ENCODE measurements at regions of chr2 and their contacts with region 1.

Region 1: GRCh38 chr2:23926750-23927571 is at the start of gene ATAD2B:
- DNase-seq: peak; percentile 85
- ATAC-seq: peak; percentile 93
- H3K4me3 ChIP-seq: peak within 1 kb of the TSS; percentile 79 to 84
- H3K27ac ChIP-seq: peak within 1 kb of the TSS; percentile 86
- H3K4me1 ChIP-seq: peaks cover 5 to 7% of the 10 kb centered on the region in 2 experiments; a peak in 2 of 4 replicates
- H3K27me3 ChIP-seq: no peaks in the 10 kb centered on the region
- CTCF ChIP-seq: peak; percentile 61 to 77 (median 71)
- POLR2A ChIP-seq: peak; percentile 76
- RAD21 ChIP-seq: peak; percentile 77
- total RNA-seq, gene ATAD2B: 9.6 TPM

Region 2: GRCh38 chr2:23916727-23917405 is 10.1 kb before region 1 on chr2:
- CTCF ChIA-PET with region 1: interaction called, 11 read pairs
- POLR2A ChIA-PET with region 1: interaction called, 5 read pairs
- RAD21 ChIA-PET with region 1: no interaction called
- intact Hi-C with region 1: no loop called
- DNase-seq: no peak
- ATAC-seq: no peak
- H3K4me3 ChIP-seq: no peak overlapping the region
- H3K27ac ChIP-seq: no peak overlapping the region
- H3K4me1 ChIP-seq: peaks cover 11 to 23% of the 10 kb centered on the region in 2 experiments
- H3K27me3 ChIP-seq: no peaks in the 10 kb centered on the region
- CTCF ChIP-seq: no peak
- POLR2A ChIP-seq: no peak
- RAD21 ChIP-seq: no peak

Region 3: DNA sequence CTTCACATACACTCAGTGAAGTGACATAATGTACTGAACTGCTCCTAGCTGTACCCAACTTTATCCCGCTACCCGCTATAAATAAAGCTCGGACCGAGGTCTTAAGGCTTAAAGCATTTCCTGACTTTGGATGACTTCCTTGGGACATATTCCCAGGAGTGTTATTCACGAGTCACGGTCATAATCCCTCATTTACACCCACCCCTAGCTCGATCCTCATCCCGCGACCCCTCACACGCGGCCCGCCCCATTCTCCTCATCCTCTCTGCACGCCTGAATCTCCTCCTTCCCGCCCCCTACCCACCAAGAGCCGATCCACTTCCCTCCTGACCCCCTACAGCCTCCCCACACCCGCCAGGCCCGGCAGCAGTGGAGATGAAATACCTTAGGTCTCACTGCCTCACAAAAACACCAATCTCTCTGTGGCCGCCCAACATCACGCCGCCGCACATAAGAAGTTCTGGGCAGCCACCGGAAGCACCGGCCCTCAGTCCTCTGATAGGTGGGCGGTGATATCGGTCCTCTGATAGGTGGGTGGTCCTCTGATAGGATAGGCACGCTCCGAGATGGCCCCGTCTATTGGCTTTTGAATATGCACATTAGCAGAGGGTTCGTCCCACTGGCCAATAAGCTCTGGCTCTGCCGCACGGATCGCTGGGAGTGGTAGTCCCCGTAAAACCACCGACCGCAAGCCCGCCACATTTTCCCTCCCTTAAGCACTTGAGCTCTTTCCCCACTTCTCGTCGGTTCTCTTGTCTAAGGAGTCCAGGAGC is 120.2 kb after region 1 on chr2 and contains the start of gene WDCP:
- CTCF ChIA-PET with region 1: interaction called, 4 read pairs
- POLR2A ChIA-PET with region 1: interaction called, 11 read pairs
- RAD21 ChIA-PET with region 1: no interaction called
- intact Hi-C with region 1: no loop called
- DNase-seq: peak; percentile 95
- ATAC-seq: peak; percentile 93
- H3K4me3 ChIP-seq: peak within 1 kb of the TSS; percentile 86 to 93
- H3K27ac ChIP-seq: peak within 1 kb of the TSS; percentile 35
- H3K4me1 ChIP-seq: peaks cover 13 to 30% of the 10 kb centered on the region in 2 experiments
- H3K27me3 ChIP-seq: no peaks in the 10 kb centered on the region
- CTCF ChIP-seq: no peak
- POLR2A ChIP-seq: peak; percentile 86
- RAD21 ChIP-seq: no peak
- total RNA-seq, gene WDCP: 19.9 TPM

Region 4: DNA sequence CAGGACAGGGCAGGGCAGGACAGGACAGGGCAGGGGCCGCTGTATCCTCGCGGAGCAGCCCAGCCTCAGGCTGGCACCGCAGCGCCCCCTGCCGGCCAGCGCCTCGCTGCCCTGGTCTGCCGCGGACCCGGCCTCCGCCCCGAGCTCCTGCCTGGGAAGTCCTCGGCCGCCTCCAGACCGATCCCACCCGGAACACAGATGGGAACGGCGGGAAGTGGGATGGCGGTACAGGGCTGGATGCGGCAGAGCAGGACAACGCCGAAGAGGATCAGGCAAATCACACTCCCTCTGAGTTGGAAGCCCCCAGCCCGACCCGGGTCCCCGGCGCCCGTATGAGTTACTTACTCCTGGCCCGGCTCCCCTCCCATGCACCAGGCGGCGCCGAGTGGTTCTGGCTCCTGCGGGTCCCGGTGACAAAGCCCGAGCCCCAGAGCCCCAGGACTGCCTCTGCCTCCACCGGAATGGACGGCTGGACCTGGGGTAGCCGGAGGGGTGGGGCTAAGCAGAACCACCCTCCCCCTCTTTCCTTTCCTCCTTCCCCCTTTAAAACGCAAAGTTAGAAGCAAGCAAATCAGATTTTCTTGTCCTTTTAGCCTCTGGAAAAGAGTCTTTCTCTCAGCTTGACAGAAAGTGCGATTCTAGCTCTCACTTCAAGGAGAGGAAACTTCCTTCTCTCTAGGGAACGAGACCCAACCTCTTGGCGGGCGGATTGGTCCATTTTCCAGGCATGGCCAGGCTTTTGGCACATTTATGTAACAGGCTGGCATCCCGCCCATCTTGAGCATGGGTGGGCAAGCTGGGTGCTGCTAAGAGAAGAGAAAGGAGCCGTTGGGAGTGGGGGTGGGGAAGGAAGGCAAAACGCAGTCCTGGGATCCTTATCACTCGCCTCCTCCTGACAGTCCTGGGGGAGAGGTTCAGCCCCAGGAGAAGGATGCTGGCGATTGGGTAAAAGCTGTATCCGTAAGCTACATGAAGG is 157.7 kb after region 1 on chr2 and contains the start of gene TP53I3:
- CTCF ChIA-PET with region 1: interaction called, 29 read pairs
- POLR2A ChIA-PET with region 1: interaction called, 19 read pairs
- RAD21 ChIA-PET with region 1: interaction called, 5 to 9 read pairs
- intact Hi-C with region 1: loop called (anchors 1 kb)
- DNase-seq: peak; percentile 74
- ATAC-seq: peak; percentile 91
- H3K4me3 ChIP-seq: peak within 1 kb of the TSS; percentile 71 to 72
- H3K27ac ChIP-seq: peak within 1 kb of the TSS; percentile 95
- H3K4me1 ChIP-seq: peaks cover 11 to 20% of the 10 kb centered on the region in 2 experiments
- H3K27me3 ChIP-seq: no peaks in the 10 kb centered on the region
- CTCF ChIP-seq: peak in 2 of 3 experiments; percentile 84 to 94; a peak in 4 of 6 replicates
- POLR2A ChIP-seq: peak; percentile 48
- RAD21 ChIP-seq: no peak
- total RNA-seq, gene TP53I3: 20.1 TPM